Ascending aorta (tissue), 2 donors: ENCODE measurements at regions of chrX and their contacts with region 1.

Region 1: DNA sequence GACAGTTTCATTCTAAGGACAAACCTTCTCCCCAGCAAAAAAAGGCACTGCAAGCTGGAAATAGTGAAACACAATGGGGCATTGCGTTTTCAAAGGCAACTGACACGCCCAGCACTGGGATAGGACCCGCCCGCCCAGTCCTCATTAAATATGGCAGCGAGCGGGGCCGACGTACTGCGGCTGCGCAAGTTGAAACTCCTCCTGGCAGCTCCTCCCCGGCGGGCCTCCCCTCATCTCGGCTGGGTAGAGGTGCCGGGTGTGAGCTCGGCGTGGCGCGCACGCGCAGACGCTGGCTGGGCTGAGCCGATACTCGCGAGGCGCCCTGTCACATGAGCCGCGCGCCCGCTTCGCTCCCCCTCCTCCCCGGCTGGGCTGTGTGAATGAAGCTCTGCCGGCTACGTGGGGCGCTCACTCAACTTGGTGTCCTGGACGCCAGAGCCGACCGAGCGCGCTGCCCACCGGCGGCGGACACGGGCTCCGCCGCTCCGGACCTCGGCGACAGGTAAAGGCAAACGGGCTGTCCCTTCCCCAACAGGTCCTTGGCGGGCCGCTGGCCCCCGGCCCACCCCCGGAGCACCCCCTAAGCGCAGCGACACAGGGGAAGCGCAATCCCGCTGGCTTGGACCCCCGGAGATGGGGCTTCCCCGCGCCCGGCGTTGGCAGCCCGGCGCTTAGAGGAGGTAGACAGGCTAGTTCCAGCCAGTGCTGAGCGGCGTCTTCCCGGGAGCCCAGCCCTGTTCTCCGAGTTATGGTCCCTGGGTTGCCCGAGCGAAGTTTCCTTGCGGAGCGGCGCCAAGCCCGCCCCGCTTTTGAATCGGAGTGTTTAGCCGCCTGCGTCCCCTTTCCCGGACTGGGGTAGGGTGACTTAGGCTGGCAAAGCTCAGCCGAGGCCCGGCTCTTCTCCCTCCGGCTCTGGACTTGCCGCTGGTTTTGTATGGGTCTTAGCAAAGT is at the start of gene CLCN5:
- DNase-seq: peak; percentile 86 to 98
- H3K4me3 ChIP-seq: peak within 1 kb of the TSS; percentile 59 to 89
- H3K27ac ChIP-seq: peak within 1 kb of the TSS; percentile 58 to 86
- H3K4me1 ChIP-seq: no peaks in the 10 kb centered on the region
- H3K27me3 ChIP-seq: no peaks in the 10 kb centered on the region
- CTCF ChIP-seq: no peak
- total RNA-seq, gene CLCN5: 2.0 TPM

Region 2: DNA sequence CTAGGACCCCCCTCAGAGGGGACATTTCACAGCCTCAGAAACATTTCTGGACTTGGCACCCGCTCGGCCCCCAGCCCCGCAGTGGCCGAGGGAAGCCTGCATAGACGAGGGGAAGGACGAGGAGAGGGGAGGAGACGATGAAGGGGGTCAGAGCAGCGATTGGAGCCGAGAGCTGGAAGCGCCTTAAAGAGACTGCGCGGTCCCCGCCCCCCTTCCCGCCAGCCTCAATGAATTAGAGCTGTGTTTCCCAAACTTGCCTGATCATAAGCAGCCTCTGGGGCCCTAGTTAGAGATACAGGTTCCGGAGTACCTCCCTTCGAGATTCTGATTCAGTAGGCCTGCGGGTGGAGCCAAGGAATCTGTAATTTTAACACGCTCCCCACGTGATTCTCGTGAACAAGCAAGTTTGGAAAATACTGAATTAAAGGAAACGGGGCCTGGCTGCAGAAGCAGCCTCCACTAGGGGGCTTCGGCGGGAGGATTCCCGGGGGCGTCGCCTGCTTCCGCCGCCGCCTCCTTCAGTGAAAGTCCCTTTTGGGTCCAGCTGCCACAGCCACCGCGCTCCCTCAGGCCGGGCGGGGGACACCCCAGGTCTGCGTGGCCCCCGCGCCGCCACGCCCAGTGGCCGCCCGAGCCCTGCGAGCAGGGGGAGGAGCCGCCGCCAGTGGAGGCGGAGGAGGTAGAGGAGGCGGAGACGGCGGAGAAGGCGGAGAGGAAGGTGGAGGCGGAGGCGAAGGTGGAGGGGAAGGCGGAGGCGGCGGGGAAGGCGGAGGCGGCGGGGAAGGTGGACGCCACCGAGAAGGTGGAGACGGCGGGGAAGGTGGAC is 43.5 kb before region 1 on chrX and contains the start of gene USP27X:
- intact Hi-C with region 1: loop called (anchors 1 kb)
- DNase-seq: peak; percentile 25 to 86
- H3K4me3 ChIP-seq: peak within 1 kb of the TSS; percentile 46 to 81
- H3K27ac ChIP-seq: peak within 1 kb of the TSS; percentile 83 to 85
- H3K4me1 ChIP-seq: no peaks in the 10 kb centered on the region
- H3K27me3 ChIP-seq: no peaks in the 10 kb centered on the region
- CTCF ChIP-seq: peak; percentile 46 to 58 (median 55)
- total RNA-seq, gene USP27X: not detected